Naive thymus-derived CD8-positive, alpha-beta T cell (primary cell): ENCODE measurements at regions of chr19 and their contacts with region 1.

Region 1: GRCh38 chr19:19732579-19733501 is at the start of gene ZNF14:
- DNase-seq: peak; percentile 79 to 96 (median 89)
- ATAC-seq: peak; percentile 96 to 99
- H3K4me3 Mint-ChIP-seq: peak within 1 kb of the TSS; percentile 94 to 100 (median 98)
- H3K27ac Mint-ChIP-seq: peak within 1 kb of the TSS; percentile 89 to 99 (median 98)
- H3K4me1 Mint-ChIP-seq: peaks cover 7 to 38% (median 27%) of the 10 kb centered on the region in 4 donors
- H3K27me3 Mint-ChIP-seq: no peaks in the 10 kb centered on the region
- polyA plus RNA-seq, gene ZNF14: 8.2 to 16.3 (median 11.4) TPM

Region 2: GRCh38 chr19:19686580-19686979 is 46.3 kb before region 1 on chr19:
- POLR2A ChIA-PET with region 1: interaction called, 13 read pairs
- DNase-seq: no peak
- ATAC-seq: peak in 1 of 2 donors; percentile 37
- H3K4me3 Mint-ChIP-seq: peak overlapping the region in 1 of 10 donors; percentile 1
- H3K27ac Mint-ChIP-seq: peak overlapping the region in 3 of 10 donors; percentile 17 to 75 (median 19)
- H3K4me1 Mint-ChIP-seq: peaks cover 0 to 3% (median under 1%) of the 10 kb centered on the region in 4 donors
- H3K27me3 Mint-ChIP-seq: no peaks in the 10 kb centered on the region

Region 3: GRCh38 chr19:19758164-19758563 is 25.3 kb after region 1 on chr19:
- POLR2A ChIA-PET with region 1: no interaction called
- DNase-seq: no peak
- ATAC-seq: no peak
- H3K4me3 Mint-ChIP-seq: no peak overlapping the region
- H3K27ac Mint-ChIP-seq: no peak overlapping the region
- H3K4me1 Mint-ChIP-seq: no peaks in the 10 kb centered on the region
- H3K27me3 Mint-ChIP-seq: no peaks in the 10 kb centered on the region

Region 4: GRCh38 chr19:19776041-19777008 is 43.5 kb after region 1 on chr19:
- POLR2A ChIA-PET with region 1: interaction called, 43 read pairs
- DNase-seq: peak; percentile 80 to 94 (median 91)
- ATAC-seq: peak; percentile 97 to 98
- H3K4me3 Mint-ChIP-seq: peak overlapping the region; percentile 94 to 100 (median 99)
- H3K27ac Mint-ChIP-seq: peak overlapping the region; percentile 95 to 99 (median 96)
- H3K4me1 Mint-ChIP-seq: peaks cover 21 to 65% (median 58%) of the 10 kb centered on the region in 4 donors
- H3K27me3 Mint-ChIP-seq: no peaks in the 10 kb centered on the region

Region 5: DNA sequence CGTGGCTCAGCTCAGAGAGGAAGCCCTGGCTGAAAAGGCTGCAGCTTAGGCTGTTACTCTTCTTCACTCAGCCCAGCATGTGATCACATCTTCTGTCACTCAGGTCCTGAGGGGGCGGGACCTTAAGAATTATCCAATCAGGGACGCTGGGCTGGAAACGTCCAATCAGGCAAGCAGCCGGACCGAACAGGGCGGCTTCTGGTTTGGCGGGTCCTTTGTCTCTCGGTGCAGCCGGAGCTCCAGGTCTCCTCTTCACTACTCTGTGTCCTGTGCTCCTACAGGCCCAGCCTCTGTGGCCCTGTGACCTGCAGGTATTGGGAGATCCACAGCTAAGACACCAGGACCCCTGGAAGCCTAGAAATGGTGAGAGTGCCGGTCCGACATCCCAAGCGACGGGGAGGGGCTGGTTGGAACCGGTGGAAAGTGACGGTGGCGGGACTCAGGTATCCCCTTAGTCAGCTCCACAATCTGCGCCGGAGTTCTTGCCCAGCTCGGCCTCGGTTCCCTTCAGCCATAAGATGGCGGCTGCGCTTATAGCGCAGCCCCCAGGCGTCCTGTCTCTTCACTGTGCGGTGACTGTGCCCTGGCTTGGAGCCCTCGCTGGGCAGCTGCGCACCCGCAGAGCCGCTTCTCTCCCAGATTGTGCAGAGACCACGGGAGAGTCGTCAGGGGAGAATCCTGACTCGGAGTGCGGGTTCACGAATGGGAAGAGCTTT is 168.0 kb after region 1 on chr19 and contains the start of gene ZNF93:
- POLR2A ChIA-PET with region 1: interaction called, 20 read pairs
- DNase-seq: peak; percentile 68 to 96 (median 91)
- ATAC-seq: peak; percentile 95 to 97
- H3K4me3 Mint-ChIP-seq: peak within 1 kb of the TSS; percentile 92 to 100 (median 96)
- H3K27ac Mint-ChIP-seq: peak within 1 kb of the TSS; percentile 80 to 98 (median 95)
- H3K4me1 Mint-ChIP-seq: peaks cover 20 to 39% (median 34%) of the 10 kb centered on the region in 4 donors
- H3K27me3 Mint-ChIP-seq: no peaks in the 10 kb centered on the region
- polyA plus RNA-seq, gene ZNF93: 7.7 to 11.5 (median 11.2) TPM